CD4-positive, alpha-beta T cell (primary cell): ENCODE measurements at regions of chr19 and their contacts with region 1.

Region 1: GRCh38 chr19:44304659-44305193 is at the start of gene ZNF235:
- DNase-seq: peak; percentile 24 to 88 (median 60)
- ATAC-seq: peak; percentile 97
- H3K4me3 ChIP-seq: peak within 1 kb of the TSS; percentile 96
- H3K4me3 Mint-ChIP-seq: peak within 1 kb of the TSS; percentile 92
- H3K27ac ChIP-seq: peak within 1 kb of the TSS in 1 of 2 donors; percentile 58
- H3K27ac Mint-ChIP-seq: peak within 1 kb of the TSS; percentile 11
- H3K4me1 ChIP-seq: peaks cover 19% of the 10 kb centered on the region
- H3K4me1 Mint-ChIP-seq: peaks cover 18% of the 10 kb centered on the region
- H3K27me3 ChIP-seq: no peaks in the 10 kb centered on the region
- H3K27me3 Mint-ChIP-seq: peaks cover 5% of the 10 kb centered on the region
- CTCF ChIP-seq: no peak
- total RNA-seq, gene ZNF235: 2.4 TPM

Region 2: DNA sequence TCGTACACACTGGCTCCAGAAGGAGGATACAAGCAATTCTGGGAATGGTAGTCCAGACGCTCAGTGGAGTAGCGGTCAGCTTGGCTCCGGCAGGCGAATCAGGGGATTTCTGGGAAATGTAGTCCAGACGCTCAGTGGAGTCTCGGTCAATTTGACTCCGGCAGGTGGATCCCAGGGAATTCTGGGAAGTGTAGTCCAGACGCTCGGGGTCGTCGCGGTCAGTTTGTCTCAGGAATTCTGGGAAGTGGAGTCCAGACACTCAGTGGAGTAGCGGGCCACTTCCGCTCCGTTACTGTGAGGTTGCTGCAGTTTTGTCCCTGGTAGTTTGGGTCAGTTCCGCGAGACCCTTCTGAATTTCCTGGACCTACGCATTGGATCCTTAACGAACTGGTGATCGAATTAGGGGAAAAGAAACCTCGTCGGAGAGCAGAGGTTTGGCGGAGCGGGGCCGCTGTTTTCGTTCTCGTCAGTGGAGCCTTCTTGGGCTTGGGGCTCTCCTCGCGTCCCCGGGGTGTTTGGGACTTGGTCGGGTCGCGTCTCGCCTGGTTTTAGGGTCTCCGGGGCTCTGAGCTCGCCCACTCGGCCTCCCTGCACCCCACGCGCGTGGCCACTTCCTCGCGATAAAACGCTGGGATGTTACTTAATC is 191.5 kb before region 1 on chr19 and contains the start of gene ZNF225:
- CTCF ChIA-PET with region 1: no interaction called
- POLR2A ChIA-PET with region 1: no interaction called
- intact Hi-C with region 1: loop called in 1 of 2 experiments (anchors 10 kb)
- DNase-seq: peak; percentile 55 to 94 (median 72)
- ATAC-seq: peak; percentile 89
- H3K4me3 ChIP-seq: peak within 1 kb of the TSS; percentile 75
- H3K4me3 Mint-ChIP-seq: peak within 1 kb of the TSS; percentile 95
- H3K27ac ChIP-seq: peak within 1 kb of the TSS in 1 of 2 donors; percentile 29
- H3K27ac Mint-ChIP-seq: peak within 1 kb of the TSS; percentile 57
- H3K4me1 ChIP-seq: peaks cover 17% of the 10 kb centered on the region
- H3K4me1 Mint-ChIP-seq: peaks cover 37% of the 10 kb centered on the region
- H3K27me3 ChIP-seq: no peaks in the 10 kb centered on the region
- H3K27me3 Mint-ChIP-seq: no peaks in the 10 kb centered on the region
- CTCF ChIP-seq: no peak
- total RNA-seq, gene ZNF225: 0.71 to 0.73 TPM

Region 3: GRCh38 chr19:44212250-44212865 is 92.4 kb before region 1 on chr19 and contains the start of gene ZNF227:
- CTCF ChIA-PET with region 1: interaction called, 3 read pairs
- POLR2A ChIA-PET with region 1: interaction called, 5 read pairs
- intact Hi-C with region 1: loop called in 1 of 2 experiments (anchors 2 kb)
- DNase-seq: peak; percentile 59 to 88 (median 76)
- ATAC-seq: peak; percentile 96
- H3K4me3 ChIP-seq: peak within 1 kb of the TSS; percentile 65
- H3K4me3 Mint-ChIP-seq: peak within 1 kb of the TSS; percentile 96
- H3K27ac ChIP-seq: peak within 1 kb of the TSS; percentile 70 to 73
- H3K27ac Mint-ChIP-seq: peak within 1 kb of the TSS; percentile 90
- H3K4me1 ChIP-seq: peaks cover 9% of the 10 kb centered on the region
- H3K4me1 Mint-ChIP-seq: peaks cover 48% of the 10 kb centered on the region
- H3K27me3 ChIP-seq: no peaks in the 10 kb centered on the region
- H3K27me3 Mint-ChIP-seq: no peaks in the 10 kb centered on the region
- CTCF ChIP-seq: no peak
- total RNA-seq, gene ZNF227: 16.2 to 17.2 TPM

Region 4: GRCh38 chr19:44500148-44500956 is 195.6 kb after region 1 on chr19 and contains the start of gene ZNF180:
- CTCF ChIA-PET with region 1: no interaction called
- POLR2A ChIA-PET with region 1: interaction called, 3 read pairs
- intact Hi-C with region 1: loop called in 1 of 2 experiments (anchors 5 kb)
- DNase-seq: peak; percentile 89 to 98 (median 94)
- ATAC-seq: peak; percentile 91
- H3K4me3 ChIP-seq: peak within 1 kb of the TSS; percentile 88
- H3K4me3 Mint-ChIP-seq: peak within 1 kb of the TSS; percentile 95
- H3K27ac ChIP-seq: peak within 1 kb of the TSS; percentile 63 to 74
- H3K27ac Mint-ChIP-seq: peak within 1 kb of the TSS; percentile 79
- H3K4me1 ChIP-seq: peaks cover 26% of the 10 kb centered on the region
- H3K4me1 Mint-ChIP-seq: peaks cover 38% of the 10 kb centered on the region
- H3K27me3 ChIP-seq: peaks cover 1 to 5% of the 10 kb centered on the region in 2 experiments
- H3K27me3 Mint-ChIP-seq: peaks cover 17% of the 10 kb centered on the region
- CTCF ChIP-seq: peak; percentile 60
- total RNA-seq, gene ZNF180: 7.6 to 9.4 TPM